ENCODE measurements at regions of chr12 and their contacts with region 1.

Region 1: GRCh38 chr12:81644503-81644902 is 114.6 kb downstream of the PPFIA2 start:
- DNase-seq: no peak
- H3K4me3 Mint-ChIP-seq: no peak overlapping the region
- H3K27ac Mint-ChIP-seq: no peak overlapping the region
- H3K4me1 Mint-ChIP-seq: no peaks in the 10 kb centered on the region
- H3K27me3 Mint-ChIP-seq: peaks cover 3% of the 10 kb centered on the region

Region 2: GRCh38 chr12:81797100-81797499 is 152.6 kb after region 1 on chr12:
- CTCF ChIA-PET with region 1: no interaction called
- POLR2A ChIA-PET with region 1: no interaction called
- intact Hi-C with region 1: loop called (anchors 5 kb)
- DNase-seq: no peak
- H3K4me3 Mint-ChIP-seq: no peak overlapping the region
- H3K27ac Mint-ChIP-seq: no peak overlapping the region
- H3K4me1 Mint-ChIP-seq: peaks cover 8% of the 10 kb centered on the region
- H3K27me3 Mint-ChIP-seq: peaks cover 2% of the 10 kb centered on the region

Region 3: DNA sequence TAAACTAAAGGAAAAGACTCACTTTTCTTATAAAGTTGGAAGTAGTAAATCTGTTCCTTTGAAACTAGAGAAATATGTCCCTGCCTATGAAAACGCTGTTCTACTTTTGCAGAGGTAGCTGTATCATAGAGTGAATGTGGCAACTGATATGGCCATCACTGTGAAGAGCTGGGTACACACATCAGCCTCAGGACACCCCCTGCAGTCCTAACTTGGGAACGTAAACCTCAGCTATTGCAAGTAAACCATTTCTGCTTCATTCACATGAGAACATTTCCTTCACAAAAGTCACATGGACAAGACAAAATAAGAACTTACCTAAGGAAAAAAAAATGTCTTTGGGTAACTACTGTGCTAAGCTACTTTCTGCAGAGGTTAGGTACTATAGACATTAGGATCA is 348.0 kb after region 1 on chr12:
- CTCF ChIA-PET with region 1: interaction called, 7 read pairs
- POLR2A ChIA-PET with region 1: no interaction called
- intact Hi-C with region 1: loop called (anchors 1 kb)
- DNase-seq: peak; percentile 26
- H3K4me3 Mint-ChIP-seq: no peak overlapping the region
- H3K27ac Mint-ChIP-seq: no peak overlapping the region
- H3K4me1 Mint-ChIP-seq: no peaks in the 10 kb centered on the region
- H3K27me3 Mint-ChIP-seq: no peaks in the 10 kb centered on the region

Region 4: DNA sequence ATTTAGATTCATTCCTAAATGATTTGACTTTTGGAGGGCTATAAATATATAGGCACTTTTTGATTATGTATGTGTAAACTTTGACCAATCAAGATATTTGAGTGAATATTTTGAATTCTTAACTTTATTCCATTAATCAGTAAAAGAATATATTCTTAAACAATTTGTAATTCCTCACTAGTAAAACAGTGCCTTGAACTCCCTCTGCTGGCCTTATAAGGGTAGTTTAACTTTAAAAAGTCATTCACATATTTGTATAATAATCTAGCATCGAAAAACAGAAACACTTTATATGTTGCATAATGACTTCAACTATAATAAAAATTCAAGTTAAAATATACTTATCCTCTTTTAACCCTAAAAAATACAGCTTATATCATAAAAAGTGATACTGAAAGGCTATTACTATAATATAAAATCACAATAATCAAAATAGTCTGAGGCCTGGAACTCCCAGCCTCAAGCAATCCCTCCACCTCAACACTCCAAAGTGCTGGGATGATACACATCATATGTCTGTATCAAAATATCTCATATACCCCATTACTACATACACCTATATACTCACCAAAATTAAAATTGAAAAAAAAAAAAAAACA is 682.5 kb after region 1 on chr12:
- CTCF ChIA-PET with region 1: no interaction called
- POLR2A ChIA-PET with region 1: no interaction called
- intact Hi-C with region 1: loop called (anchors 1 kb)
- DNase-seq: no peak
- H3K4me3 Mint-ChIP-seq: no peak overlapping the region
- H3K27ac Mint-ChIP-seq: no peak overlapping the region
- H3K4me1 Mint-ChIP-seq: no peaks in the 10 kb centered on the region
- H3K27me3 Mint-ChIP-seq: peaks cover 2% of the 10 kb centered on the region

Region 5: DNA sequence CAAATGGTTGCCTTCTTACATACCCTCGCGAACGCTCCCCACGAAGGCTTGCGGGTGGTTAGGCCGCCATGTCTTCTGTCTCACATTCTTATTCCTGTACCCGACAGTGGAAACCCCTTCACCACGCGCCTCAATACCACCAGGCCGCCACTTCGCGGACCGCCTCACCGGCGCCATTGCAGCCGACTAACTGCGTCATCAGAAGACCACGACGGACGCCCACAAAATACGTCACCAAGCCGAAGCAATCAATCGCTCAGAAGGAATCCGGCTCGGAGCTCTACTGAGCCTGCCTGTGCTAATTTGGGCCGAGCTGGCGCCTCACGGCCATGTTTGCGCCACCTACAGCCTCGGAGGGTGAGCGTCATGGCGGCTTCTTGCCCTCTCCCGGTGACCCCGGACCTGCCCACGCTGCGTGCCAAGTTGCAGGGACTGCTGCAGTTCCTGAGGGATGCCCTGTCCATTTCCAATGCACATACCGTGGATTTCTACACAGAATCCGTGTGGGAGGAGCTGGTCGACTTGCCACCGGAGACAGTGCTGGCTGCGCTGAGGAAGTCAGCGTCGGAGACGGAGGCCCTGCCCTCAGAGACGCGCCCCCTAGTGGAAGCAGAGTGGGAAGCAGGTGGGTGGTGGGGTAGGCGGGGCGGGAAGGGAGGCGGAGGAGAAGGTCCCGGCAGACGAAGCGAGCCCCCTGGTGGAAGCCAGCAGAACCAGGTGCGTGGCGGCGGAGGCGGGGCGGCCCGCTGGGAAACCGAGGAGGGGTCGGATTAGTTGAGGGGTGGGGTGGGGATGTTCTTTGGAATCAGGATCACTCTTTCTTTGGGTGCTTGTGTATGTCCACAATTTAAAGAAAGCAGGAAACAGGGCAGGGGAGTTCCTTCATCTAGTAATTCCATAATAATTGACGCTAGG is 714.0 kb after region 1 on chr12 and contains the starts of genes CCDC59 and METTL25:
- CTCF ChIA-PET with region 1: interaction called, 6 read pairs
- POLR2A ChIA-PET with region 1: no interaction called
- intact Hi-C with region 1: loop called (anchors 1 kb)
- DNase-seq: peak; percentile 98
- H3K4me3 Mint-ChIP-seq: peak within 1 kb of the TSS; percentile 98
- H3K27ac Mint-ChIP-seq: peak within 1 kb of the TSS; percentile 97
- H3K4me1 Mint-ChIP-seq: peaks cover 44% of the 10 kb centered on the region
- H3K27me3 Mint-ChIP-seq: no peaks in the 10 kb centered on the region
- total RNA-seq, gene CCDC59: 77.6 to 77.8 TPM
- total RNA-seq, gene METTL25: 5.2 to 6.2 TPM